Head of caudate nucleus (tissue), 42 donors: ENCODE measurements at regions of chr2 and their contacts with region 1.

Region 1: GRCh38 chr2:26745609-26746327 is 18.3 kb upstream of the SLC35F6 start:
- DNase-seq: peak; percentile 67 to 97 (median 91)

Region 2: DNA sequence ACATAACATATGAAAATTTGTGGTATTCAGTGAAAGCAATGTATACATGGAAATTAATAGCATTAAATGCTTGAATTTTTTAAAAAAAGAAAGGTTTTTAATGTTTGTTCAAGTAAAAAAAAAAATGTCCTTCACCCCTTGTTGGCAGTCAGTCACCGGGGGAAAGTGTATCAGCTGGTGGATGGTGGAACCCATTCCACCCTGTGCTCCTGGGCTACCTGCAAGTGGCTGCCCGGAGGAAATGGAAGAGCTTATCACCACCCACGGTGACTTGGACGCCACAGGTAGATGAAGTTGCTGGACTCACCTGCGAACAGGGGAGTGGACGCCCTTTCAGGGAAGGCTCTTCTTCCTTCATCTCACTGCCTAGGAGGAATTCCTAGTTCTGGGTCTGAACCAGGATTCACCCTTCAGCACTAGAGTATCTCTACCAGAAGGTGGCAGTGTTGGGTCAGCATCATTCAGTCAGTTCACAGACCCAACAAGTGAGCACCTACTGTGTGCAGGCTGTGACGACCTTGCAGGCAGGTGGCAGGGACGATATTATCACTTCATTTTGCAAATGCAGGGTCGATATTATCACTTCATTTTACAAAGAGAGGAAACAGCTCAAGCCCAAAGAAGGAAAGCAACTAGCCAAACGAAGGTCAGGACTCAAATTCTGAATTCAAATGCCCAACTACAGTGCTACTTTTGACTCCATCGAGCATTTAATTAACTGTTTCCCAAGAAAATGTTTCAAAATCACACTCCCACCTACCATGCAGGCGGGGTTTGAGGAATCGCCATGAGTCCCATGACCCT is 140.4 kb before region 1 on chr2:
- intact Hi-C with region 1: loop called (anchors 2 kb)
- DNase-seq: peak in 25 of 42 donors; percentile 15 to 75 (median 44)

Region 3: GRCh38 chr2:26675701-26676111 is 70.1 kb before region 1 on chr2:
- intact Hi-C with region 1: no loop called
- DNase-seq: peak in 1 of 42 donors; percentile 19

Region 4: GRCh38 chr2:26685989-26686839 is 59.6 kb before region 1 on chr2:
- intact Hi-C with region 1: no loop called
- DNase-seq: no peak